Mammary epithelial cell (primary cell): ENCODE measurements at regions of chr16 and their contacts with region 1.

Region 1: DNA sequence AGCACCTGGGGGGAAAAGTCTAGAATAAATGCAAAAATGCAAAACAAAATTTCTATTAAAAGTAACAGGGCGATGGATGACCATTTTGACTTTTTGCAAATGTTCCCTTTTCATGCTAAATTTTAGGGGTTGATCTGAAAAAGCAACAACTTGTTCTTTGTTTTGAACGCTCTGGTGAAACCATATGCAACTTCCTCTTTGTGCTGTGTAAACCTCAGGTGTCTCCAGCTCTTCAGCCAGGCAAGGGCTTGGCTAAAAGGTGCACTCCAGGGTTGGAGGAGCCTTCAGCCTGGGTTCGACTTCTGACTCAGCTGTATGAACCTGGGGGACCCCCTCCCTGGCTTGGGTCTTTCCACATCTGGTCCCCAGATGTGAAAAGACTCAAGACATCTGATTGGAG is 9.5 kb downstream of the IRF8 start:
- DNase-seq: no peak
- H3K4me3 ChIP-seq: no peak overlapping the region
- H3K27ac ChIP-seq: no peak overlapping the region
- H3K4me1 ChIP-seq: no peaks in the 10 kb centered on the region
- H3K27me3 ChIP-seq: no peaks in the 10 kb centered on the region
- CTCF ChIP-seq: no peak

Region 2: DNA sequence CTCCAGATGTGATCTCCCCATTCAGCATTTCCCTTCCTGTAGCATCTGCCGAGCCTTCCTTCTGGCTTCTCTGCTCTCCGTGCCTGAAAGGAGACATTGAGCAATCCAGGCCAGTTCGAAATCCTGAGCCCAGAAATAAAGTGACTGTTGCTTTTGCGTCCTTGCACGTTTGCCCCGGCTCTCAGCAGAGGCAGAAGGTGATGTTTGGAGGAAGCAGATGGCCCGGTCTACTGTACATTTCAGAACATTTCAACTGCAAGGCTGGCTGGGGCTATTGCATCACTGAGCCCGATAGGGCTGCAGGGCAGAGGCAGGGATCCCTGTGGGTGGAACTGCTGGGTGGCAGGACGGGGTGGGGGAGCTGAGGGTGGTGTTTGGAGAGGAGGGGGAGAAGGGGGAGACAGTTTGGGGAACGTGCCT is 20.0 kb after region 1 on chr16:
- CTCF ChIA-PET with region 1: no interaction called
- dilution Hi-C with region 1: no loop called
- in situ Hi-C with region 1: no loop called
- intact Hi-C with region 1: no loop called
- DNase-seq: no peak
- H3K4me3 ChIP-seq: no peak overlapping the region
- H3K27ac ChIP-seq: no peak overlapping the region
- H3K4me1 ChIP-seq: no peaks in the 10 kb centered on the region
- H3K27me3 ChIP-seq: peaks cover 2% of the 10 kb centered on the region
- CTCF ChIP-seq: no peak

Region 3: GRCh38 chr16:85994492-85995490 is 86.3 kb after region 1 on chr16:
- CTCF ChIA-PET with region 1: no interaction called
- dilution Hi-C with region 1: loop called (anchors 5 kb)
- in situ Hi-C with region 1: no loop called
- intact Hi-C with region 1: no loop called
- DNase-seq: no peak
- H3K4me3 ChIP-seq: no peak overlapping the region
- H3K27ac ChIP-seq: no peak overlapping the region
- H3K4me1 ChIP-seq: no peaks in the 10 kb centered on the region
- H3K27me3 ChIP-seq: peaks cover 2% of the 10 kb centered on the region
- CTCF ChIP-seq: no peak